Common myeloid progenitor, CD34-positive (primary cell): ENCODE measurements at regions of chr4 and their contacts with region 1.

Region 1: GRCh38 chr4:10192331-10192730 is 75.7 kb upstream of the WDR1 start:
- DNase-seq: peak; percentile 28 to 43 (median 33)
- H3K4me3 ChIP-seq: no peak overlapping the region
- H3K27ac ChIP-seq: no peak overlapping the region
- H3K4me1 ChIP-seq: peaks cover 0 to 7% (median 0%) of the 10 kb centered on the region in 4 experiments
- H3K27me3 ChIP-seq: no peaks in the 10 kb centered on the region

Region 2: DNA sequence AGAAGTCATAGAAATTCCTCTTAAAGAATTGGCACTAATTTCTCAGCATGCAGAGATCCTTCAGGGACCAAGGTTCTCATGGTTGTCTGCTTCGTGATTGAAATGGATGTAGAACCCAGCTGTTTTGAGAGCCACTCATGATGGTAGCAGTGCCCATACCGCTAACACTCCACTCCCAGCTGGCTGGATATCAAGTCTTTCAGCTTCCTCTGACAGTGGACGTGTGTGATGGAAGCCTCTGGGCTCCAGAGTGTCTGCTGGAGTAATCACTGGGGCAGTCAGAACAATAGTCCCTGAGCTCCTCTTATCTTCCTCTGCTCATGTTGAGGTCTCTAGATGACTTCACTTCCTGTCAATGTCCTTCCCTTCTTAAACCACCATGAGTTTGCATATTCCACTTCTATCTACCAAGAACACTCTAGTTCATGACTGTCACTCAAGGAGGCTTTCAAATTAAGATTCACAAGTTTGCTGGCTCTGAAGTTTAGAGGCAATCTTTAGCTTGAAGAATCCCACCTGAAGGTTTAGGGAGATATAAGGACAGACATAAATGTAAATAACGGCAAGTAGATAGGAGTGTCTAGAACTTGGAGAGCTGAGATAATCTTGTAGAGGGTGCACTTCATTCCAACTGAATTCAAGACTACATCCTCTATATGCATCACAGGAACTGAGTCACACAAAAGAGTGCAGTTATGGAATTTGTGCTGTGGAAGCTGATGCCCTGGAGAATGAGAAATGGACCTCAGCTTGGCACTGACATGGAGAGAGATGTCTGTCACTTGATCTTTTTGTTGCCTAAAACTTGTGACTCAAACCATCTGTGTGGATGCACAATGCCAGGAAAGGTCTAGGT is 11.2 kb before region 1 on chr4:
- CTCF ChIA-PET with region 1: interaction called, 183 read pairs
- POLR2A ChIA-PET with region 1: interaction called, 4 read pairs
- DNase-seq: peak; percentile 95 to 100 (median 98)
- H3K4me3 ChIP-seq: peak overlapping the region in 3 of 7 experiments; percentile 31 to 46 (median 41)
- H3K27ac ChIP-seq: peak overlapping the region; percentile 69 to 80
- H3K4me1 ChIP-seq: peaks cover 23 to 59% (median 45%) of the 10 kb centered on the region in 4 experiments
- H3K27me3 ChIP-seq: no peaks in the 10 kb centered on the region